Endothelial cell of umbilical vein (primary cell): ENCODE measurements at regions of chr10 and their contacts with region 1.

Region 1: GRCh38 chr10:6416892-6417512 is 163.1 kb downstream of the PRKCQ start:
- DNase-seq: peak; percentile 71
- H3K4me3 ChIP-seq: no peak overlapping the region
- H3K27ac ChIP-seq: no peak overlapping the region
- H3K4me1 ChIP-seq: no peaks in the 10 kb centered on the region
- H3K27me3 ChIP-seq: peaks cover 6 to 7% of the 10 kb centered on the region in 2 experiments
- CTCF ChIP-seq: peak; percentile 39 to 44
- POLR2A ChIP-seq: no peak

Region 2: GRCh38 chr10:6351495-6351894 is 65.5 kb before region 1 on chr10:
- CTCF ChIA-PET with region 1: no interaction called
- POLR2A ChIA-PET with region 1: no interaction called
- dilution Hi-C with region 1: no loop called
- intact Hi-C with region 1: no loop called
- DNase-seq: no peak
- H3K4me3 ChIP-seq: no peak overlapping the region
- H3K27ac ChIP-seq: no peak overlapping the region
- H3K4me1 ChIP-seq: no peaks in the 10 kb centered on the region
- H3K27me3 ChIP-seq: no peaks in the 10 kb centered on the region
- CTCF ChIP-seq: no peak
- POLR2A ChIP-seq: no peak

Region 3: DNA sequence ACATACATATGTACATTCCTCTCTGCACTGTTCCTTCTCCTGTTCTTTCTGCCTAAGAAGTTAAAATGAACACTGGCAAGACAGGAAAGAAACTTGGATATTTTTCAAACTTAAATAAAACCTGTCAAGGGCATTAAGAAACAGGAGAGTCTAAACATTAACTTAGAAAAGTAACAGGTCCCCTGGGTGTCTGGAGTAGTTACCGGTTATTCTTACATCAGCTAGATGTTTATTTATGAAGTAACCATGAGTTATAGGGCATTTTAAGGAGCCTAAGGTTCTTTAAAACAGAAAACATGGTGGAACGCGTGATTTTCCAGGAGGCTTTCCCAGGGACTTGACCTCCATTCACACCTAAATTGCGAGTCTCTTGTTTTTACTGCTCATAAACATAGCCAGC is 14.9 kb after region 1 on chr10:
- CTCF ChIA-PET with region 1: no interaction called
- POLR2A ChIA-PET with region 1: no interaction called
- dilution Hi-C with region 1: no loop called
- intact Hi-C with region 1: no loop called
- DNase-seq: no peak
- H3K4me3 ChIP-seq: no peak overlapping the region
- H3K27ac ChIP-seq: no peak overlapping the region
- H3K4me1 ChIP-seq: no peaks in the 10 kb centered on the region
- H3K27me3 ChIP-seq: no peaks in the 10 kb centered on the region
- CTCF ChIP-seq: no peak
- POLR2A ChIP-seq: no peak

Region 4: GRCh38 chr10:6580279-6581029 is 163.5 kb after region 1 on chr10:
- CTCF ChIA-PET with region 1: no interaction called
- POLR2A ChIA-PET with region 1: no interaction called
- dilution Hi-C with region 1: no loop called
- intact Hi-C with region 1: loop called (anchors 2 kb)
- DNase-seq: peak; percentile 68
- H3K4me3 ChIP-seq: peak overlapping the region; percentile 75 to 92 (median 92)
- H3K27ac ChIP-seq: peak overlapping the region; percentile 60
- H3K4me1 ChIP-seq: peaks cover 10% of the 10 kb centered on the region
- H3K27me3 ChIP-seq: peaks cover 14 to 30% of the 10 kb centered on the region in 2 experiments
- CTCF ChIP-seq: peak; percentile 58
- POLR2A ChIP-seq: peak; percentile 28